ENCODE measurements at regions of chr14 and their contacts with region 1.

Region 1: GRCh38 chr14:105944632-105945610 is 418.5 kb downstream of the TMEM121 start:
- DNase-seq: peak; percentile 40 to 63
- ATAC-seq: peak; percentile 38 to 85 (median 72)
- H3K4me3 ChIP-seq: no peak overlapping the region
- H3K27ac ChIP-seq: no peak overlapping the region
- H3K4me1 ChIP-seq: peaks cover 0 to 3% (median 0%) of the 10 kb centered on the region in 9 donors
- H3K27me3 ChIP-seq: peaks cover 0 to 29% (median 0%) of the 10 kb centered on the region in 7 donors
- CTCF ChIP-seq: peak; percentile 59 to 82 (median 70)

Region 2: DNA sequence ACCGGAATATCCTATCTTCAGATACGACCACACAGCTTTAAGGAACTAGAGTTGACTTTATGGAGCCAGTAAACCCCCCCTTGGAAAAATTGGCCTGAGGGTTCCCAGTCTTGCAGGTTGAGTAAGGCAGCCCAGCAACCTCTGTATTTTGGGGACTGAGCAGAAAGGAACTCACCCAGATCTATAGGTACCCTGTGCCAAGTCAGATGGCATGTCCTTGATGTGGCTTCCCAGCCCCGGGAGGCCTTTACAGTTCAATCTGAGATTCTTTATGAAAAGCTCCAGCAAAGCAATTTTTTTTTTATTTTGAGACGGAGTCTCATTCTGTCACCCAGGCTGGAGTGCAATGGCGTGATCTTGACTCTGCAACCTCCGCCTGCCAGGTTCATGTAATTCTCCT is 390.9 kb before region 1 on chr14:
- intact Hi-C with region 1: loop called in 1 of 10 experiments (anchors 10 kb)
- DNase-seq: no peak
- ATAC-seq: no peak
- H3K4me3 ChIP-seq: no peak overlapping the region
- H3K27ac ChIP-seq: no peak overlapping the region
- H3K4me1 ChIP-seq: no peaks in the 10 kb centered on the region
- H3K27me3 ChIP-seq: peaks cover 0 to 14% (median 12%) of the 10 kb centered on the region in 7 donors
- CTCF ChIP-seq: no peak

Region 3: DNA sequence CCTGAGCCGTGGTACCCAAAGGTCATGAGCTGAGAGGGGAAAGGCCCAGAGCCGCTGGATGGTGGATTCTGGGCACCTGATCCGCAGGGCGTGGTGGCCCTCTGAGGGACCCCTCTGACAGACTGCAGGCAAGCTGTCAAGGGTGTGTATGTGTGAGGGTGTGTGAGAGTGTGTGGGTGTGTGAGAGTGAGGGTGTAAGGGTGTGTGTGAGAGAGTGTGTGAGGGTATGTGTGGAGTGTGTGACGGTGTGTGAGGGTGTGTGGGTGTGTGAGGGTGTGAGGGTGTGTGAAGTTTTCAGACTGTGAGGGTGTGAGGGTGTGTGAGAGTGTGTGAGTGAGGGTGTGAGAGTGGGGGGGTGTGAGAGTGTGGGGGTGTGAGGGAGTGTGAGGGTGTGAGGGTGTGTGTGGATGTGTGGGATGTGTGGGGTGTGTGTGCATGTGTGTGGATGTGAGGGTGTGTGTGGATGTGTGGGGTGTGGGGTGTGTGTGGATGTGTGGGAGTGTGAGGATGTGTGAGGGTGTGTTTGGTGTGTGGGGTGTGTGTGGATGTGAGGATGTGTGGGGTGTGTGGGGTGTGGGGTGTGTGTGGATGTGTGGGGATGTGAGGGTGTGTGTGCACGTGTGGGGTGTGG is 261.9 kb before region 1 on chr14:
- intact Hi-C with region 1: loop called in 5 of 10 experiments (anchors 5 to 10 kb)
- DNase-seq: no peak
- ATAC-seq: no peak
- H3K4me3 ChIP-seq: no peak overlapping the region
- H3K27ac ChIP-seq: no peak overlapping the region
- H3K4me1 ChIP-seq: no peaks in the 10 kb centered on the region
- H3K27me3 ChIP-seq: peaks cover 0 to 2% (median 0%) of the 10 kb centered on the region in 7 donors
- CTCF ChIP-seq: no peak

Region 4: GRCh38 chr14:105690692-105691091 is 254.2 kb before region 1 on chr14:
- intact Hi-C with region 1: loop called in 1 of 10 experiments (anchors 10 kb)
- DNase-seq: no peak
- ATAC-seq: no peak
- H3K4me3 ChIP-seq: no peak overlapping the region
- H3K27ac ChIP-seq: no peak overlapping the region
- H3K4me1 ChIP-seq: no peaks in the 10 kb centered on the region
- H3K27me3 ChIP-seq: peaks cover 0 to 12% (median 0%) of the 10 kb centered on the region in 7 donors
- CTCF ChIP-seq: no peak

Region 5: DNA sequence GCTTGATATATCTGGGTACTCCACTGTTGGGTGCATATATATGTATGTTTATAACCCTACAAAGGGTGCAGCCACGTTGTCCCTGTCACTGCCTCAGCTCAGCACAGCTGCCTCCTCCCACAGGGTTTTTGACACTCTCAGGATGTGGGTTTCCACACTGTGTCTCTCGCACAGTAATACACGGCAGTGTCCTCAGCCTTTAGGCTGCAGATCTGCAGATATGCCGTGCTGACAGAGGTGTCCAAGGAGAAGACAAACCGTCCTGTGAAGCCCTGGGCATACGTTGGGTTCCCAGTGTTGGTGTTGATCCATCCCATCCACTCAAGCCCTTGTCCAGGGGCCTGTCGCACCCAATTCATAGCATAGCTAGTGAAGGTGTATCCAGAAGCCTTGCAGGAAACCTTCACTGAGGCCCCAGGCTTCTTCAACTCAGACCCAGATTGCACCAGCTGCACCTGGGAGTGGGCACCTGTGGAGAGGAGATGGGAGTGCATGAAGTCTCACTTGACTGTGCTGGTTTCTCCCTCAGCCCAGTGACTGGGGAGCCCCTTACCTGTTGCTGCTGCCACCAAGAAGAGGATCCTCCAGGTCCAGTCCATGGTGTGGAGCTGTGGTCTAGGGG is 80.2 kb after region 1 on chr14:
- intact Hi-C with region 1: no loop called
- DNase-seq: no peak
- ATAC-seq: no peak
- H3K4me3 ChIP-seq: no peak overlapping the region
- H3K27ac ChIP-seq: no peak overlapping the region
- H3K4me1 ChIP-seq: no peaks in the 10 kb centered on the region
- H3K27me3 ChIP-seq: peaks cover 0 to 44% (median 9%) of the 10 kb centered on the region in 7 donors
- CTCF ChIP-seq: no peak

Measured in heart right ventricle (tissue), 16 donors.